ENCODE measurements at regions of chr13 and their contacts with region 1.

Region 1: DNA sequence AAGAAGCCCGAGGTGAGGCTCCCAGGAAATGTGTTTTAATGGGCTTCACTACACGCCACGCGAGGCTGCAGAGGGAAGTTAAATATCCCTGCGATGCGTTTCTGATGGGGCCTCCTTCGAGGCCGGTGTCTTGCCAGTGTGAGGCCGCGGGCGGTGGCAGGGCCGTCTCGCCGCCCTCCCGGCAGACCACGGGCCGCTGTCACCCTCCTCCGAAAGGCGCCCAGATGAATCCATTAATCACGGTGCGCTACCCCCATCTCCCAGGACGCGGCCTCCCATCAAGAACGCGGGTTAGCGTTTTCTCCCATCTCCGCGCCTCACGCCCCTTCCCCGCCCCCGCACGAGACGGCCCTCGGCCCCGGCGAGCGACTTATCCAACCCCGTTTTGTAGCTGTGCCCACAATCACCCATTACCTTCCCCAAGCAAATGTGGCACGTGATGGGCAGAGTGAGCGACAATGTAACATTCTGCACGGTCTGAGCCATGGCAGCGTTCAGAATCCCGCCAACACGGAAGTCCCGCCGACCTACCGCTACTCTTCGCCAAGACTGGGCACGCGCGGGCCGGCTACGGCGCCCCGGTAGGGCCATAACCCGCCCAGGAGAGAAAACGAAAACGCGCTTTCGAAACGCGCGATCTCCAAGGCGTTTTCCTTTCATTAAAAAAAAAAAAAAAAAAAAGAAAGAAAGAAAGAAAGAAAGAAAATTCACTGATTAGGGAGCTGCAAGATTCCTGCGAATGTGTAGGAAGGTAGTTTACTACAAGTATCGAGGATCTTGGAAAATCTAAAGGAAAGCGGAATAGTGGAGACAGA is at the start of gene OBI1:
- DNase-seq: peak; percentile 92
- ATAC-seq: peak; percentile 98
- H3K4me3 ChIP-seq: peak within 1 kb of the TSS; percentile 57 to 94 (median 86)
- H3K4me3 Mint-ChIP-seq: peak within 1 kb of the TSS; percentile 99
- H3K27ac ChIP-seq: peak within 1 kb of the TSS; percentile 24 to 86
- H3K27ac Mint-ChIP-seq: peak within 1 kb of the TSS; percentile 94
- H3K4me1 ChIP-seq: peaks cover 11 to 14% of the 10 kb centered on the region in 2 donors
- H3K4me1 Mint-ChIP-seq: peaks cover 41% of the 10 kb centered on the region
- H3K27me3 ChIP-seq: no peaks in the 10 kb centered on the region
- H3K27me3 Mint-ChIP-seq: peaks cover 3% of the 10 kb centered on the region
- CTCF ChIP-seq: no peak
- total RNA-seq, gene OBI1: 14.8 and 15.4 TPM in 2 replicates

Region 2: DNA sequence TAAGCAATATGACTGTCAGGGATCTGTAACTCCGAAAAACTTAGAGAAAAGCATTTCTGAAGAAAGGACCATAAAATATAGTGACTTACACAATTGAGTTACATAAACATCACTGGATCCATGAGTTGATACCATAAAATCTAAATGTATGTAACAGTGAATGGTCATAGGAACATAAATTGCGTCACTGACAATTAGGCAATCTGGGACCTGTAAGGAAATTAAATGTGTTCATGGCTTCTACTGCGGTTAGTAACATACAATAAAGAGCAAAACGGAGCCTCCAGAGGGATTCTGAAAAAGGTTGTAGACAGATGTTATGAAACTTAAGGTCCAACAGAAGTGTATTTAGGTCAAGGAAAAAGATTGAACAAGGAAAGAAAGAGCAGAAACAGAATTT is 82.6 kb before region 1 on chr13:
- CTCF ChIA-PET with region 1: no interaction called
- POLR2A ChIA-PET with region 1: no interaction called
- intact Hi-C with region 1: no loop called
- DNase-seq: no peak
- ATAC-seq: no peak
- H3K4me3 ChIP-seq: no peak overlapping the region
- H3K4me3 Mint-ChIP-seq: no peak overlapping the region
- H3K27ac ChIP-seq: no peak overlapping the region
- H3K27ac Mint-ChIP-seq: no peak overlapping the region
- H3K4me1 ChIP-seq: no peaks in the 10 kb centered on the region
- H3K4me1 Mint-ChIP-seq: no peaks in the 10 kb centered on the region
- H3K27me3 ChIP-seq: peaks cover 0 to 5% (median 2%) of the 10 kb centered on the region in 4 experiments
- H3K27me3 Mint-ChIP-seq: peaks cover 36% of the 10 kb centered on the region
- CTCF ChIP-seq: no peak

Region 3: DNA sequence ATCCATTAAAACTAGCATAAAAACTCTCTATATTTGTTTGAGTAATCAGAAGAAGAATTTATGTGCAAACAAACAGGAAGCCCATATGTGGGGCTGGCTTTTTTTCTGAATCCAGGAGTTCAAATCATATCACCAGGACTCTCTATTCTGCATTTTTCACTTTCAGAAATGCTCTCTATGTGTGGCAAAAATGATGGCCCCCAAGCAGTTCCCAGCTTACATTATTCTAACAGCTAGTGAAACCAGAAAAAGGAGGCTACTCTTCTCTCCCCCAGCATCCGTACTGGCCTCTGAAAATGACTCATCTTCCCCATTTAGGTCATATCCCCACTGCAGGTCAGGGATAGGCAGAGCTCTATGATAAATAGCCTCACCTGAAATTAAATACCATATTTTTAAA is 726.9 kb after region 1 on chr13:
- CTCF ChIA-PET with region 1: no interaction called
- POLR2A ChIA-PET with region 1: no interaction called
- intact Hi-C with region 1: loop called (anchors 5 kb)
- DNase-seq: no peak
- ATAC-seq: peak; percentile 60
- H3K4me3 ChIP-seq: no peak overlapping the region
- H3K4me3 Mint-ChIP-seq: peak overlapping the region; percentile 40
- H3K27ac ChIP-seq: peak overlapping the region in 1 of 2 donors; percentile 33
- H3K27ac Mint-ChIP-seq: no peak overlapping the region
- H3K4me1 ChIP-seq: peaks cover 33 to 74% of the 10 kb centered on the region in 2 donors
- H3K4me1 Mint-ChIP-seq: peaks cover 72% of the 10 kb centered on the region
- H3K27me3 ChIP-seq: no peaks in the 10 kb centered on the region
- H3K27me3 Mint-ChIP-seq: no peaks in the 10 kb centered on the region
- CTCF ChIP-seq: no peak

Region 4: DNA sequence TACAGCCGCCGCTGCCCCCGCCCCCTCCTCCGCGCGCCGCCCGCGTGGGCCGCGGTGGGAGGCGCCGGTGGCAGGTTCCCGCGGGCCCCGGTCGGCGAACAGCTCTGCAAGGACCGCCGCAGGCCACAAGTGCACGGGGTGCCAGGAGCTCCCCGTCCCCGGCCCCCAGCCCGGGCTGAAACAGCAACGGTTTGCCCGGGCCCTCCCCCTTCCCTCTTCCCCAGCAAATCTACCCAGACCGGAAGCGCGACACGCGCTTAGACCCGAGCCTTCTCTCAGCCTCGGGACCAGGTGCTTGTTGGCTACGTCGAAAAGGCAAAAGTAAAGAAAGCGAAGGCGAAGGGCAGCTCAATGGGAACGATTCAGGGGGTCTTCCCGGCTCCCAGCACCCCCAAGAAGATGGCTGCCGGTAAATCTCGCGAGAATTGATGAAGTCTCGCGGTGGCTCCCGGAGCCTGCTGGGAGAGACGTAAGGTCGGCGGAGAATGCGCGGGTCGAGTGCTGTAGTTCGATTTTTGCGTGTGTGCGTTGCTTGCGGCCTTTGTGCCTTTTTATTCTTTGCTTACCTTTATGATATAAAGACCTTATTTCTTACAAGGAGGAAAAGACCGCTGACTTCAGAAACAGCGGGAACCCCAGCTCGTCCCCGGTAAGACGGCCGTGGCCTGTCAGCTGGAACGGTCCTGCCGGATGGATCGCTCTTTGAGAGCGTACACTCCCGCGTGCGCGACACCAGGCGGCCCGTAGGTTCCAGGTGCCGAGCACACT is 747.2 kb after region 1 on chr13 and contains the start of gene RBM26:
- CTCF ChIA-PET with region 1: no interaction called
- POLR2A ChIA-PET with region 1: interaction called, 4 read pairs
- intact Hi-C with region 1: loop called (anchors 1 kb)
- DNase-seq: peak; percentile 97
- ATAC-seq: peak; percentile 84
- H3K4me3 ChIP-seq: peak within 1 kb of the TSS; percentile 69 to 95 (median 87)
- H3K4me3 Mint-ChIP-seq: no peak within 1 kb of the TSS
- H3K27ac ChIP-seq: peak within 1 kb of the TSS; percentile 94 to 95
- H3K27ac Mint-ChIP-seq: peak within 1 kb of the TSS; percentile 98
- H3K4me1 ChIP-seq: peaks cover 32 to 48% of the 10 kb centered on the region in 2 donors
- H3K4me1 Mint-ChIP-seq: peaks cover 26% of the 10 kb centered on the region
- H3K27me3 ChIP-seq: no peaks in the 10 kb centered on the region
- H3K27me3 Mint-ChIP-seq: no peaks in the 10 kb centered on the region
- CTCF ChIP-seq: peak; percentile 15
- total RNA-seq, gene RBM26: 159 and 165 TPM in 2 replicates

Region 5: GRCh38 chr13:79703772-79704171 is 1044.9 kb after region 1 on chr13:
- CTCF ChIA-PET with region 1: no interaction called
- POLR2A ChIA-PET with region 1: no interaction called
- intact Hi-C with region 1: no loop called
- DNase-seq: no peak
- ATAC-seq: no peak
- H3K4me3 ChIP-seq: no peak overlapping the region
- H3K4me3 Mint-ChIP-seq: no peak overlapping the region
- H3K27ac ChIP-seq: no peak overlapping the region
- H3K27ac Mint-ChIP-seq: no peak overlapping the region
- H3K4me1 ChIP-seq: no peaks in the 10 kb centered on the region
- H3K4me1 Mint-ChIP-seq: no peaks in the 10 kb centered on the region
- H3K27me3 ChIP-seq: no peaks in the 10 kb centered on the region
- H3K27me3 Mint-ChIP-seq: no peaks in the 10 kb centered on the region
- CTCF ChIP-seq: no peak

Measured in B cell (primary cell).